Dorsolateral prefrontal cortex (tissue), 120 donors: ENCODE measurements at regions of chr18 and their contacts with region 1.

Region 1: DNA sequence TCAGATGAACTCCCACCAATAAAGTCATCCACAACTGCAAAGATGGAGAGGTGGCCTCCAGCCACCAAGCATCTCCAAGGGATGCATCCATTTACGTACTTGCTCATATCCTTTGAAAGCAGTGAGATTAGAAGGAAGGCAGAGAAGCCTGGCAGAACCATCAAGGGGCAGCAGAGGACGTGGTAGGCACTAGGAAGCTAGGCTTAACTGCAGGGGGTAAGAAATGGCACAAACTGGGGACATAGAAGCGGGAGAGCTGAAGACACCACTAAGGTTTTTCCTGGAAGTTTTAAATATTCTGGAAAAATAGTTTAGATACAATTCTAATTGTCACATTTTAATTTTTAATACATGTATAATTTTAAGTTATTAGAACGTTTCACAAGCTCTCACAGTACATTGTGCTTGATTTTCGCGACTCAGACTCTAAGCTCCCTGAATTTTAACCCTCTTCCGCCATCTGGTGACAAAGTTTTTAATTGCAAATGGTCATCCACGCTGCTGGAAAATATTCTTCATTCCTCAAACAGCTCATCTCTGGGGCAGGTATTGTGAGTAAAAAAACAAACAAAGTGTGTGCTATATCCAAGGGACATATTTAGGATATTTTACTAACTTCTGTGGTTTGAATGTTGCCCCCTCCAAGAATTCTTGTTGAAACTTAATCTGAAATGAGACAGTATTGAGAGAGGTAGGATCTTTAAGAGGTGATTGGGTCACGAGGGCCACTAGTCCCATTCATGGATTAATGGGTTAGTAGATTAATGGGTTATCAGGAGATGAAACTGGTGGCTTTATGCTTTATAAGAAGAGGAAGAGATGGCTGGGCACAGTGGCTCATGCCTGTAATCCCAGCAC is 1.6 kb upstream of the PSTPIP2 start:
- DNase-seq: peak in 3 of 10 donors; percentile 11 to 34 (median 31)
- H3K4me3 ChIP-seq: peak overlapping the region in 1 of 59 donors; percentile 17
- H3K27ac ChIP-seq: no peak overlapping the region
- H3K27me3 ChIP-seq: peaks cover 0 to 15% (median 0%) of the 10 kb centered on the region in 45 donors
- CTCF ChIP-seq: peak; percentile 56 to 87 (median 73)

Region 2: GRCh38 chr18:45526114-45526841 is 547.4 kb before region 1 on chr18:
- intact Hi-C with region 1: no loop called
- DNase-seq: no peak
- H3K4me3 ChIP-seq: no peak overlapping the region
- H3K27ac ChIP-seq: no peak overlapping the region
- H3K27me3 ChIP-seq: no peaks in the 10 kb centered on the region
- CTCF ChIP-seq: peak in 16 of 56 donors; percentile 12 to 45 (median 20)

Region 3: GRCh38 chr18:45664824-45665763 is 408.6 kb before region 1 on chr18:
- intact Hi-C with region 1: loop called (anchors 5 to 10 kb)
- DNase-seq: peak in 8 of 10 donors; percentile 38 to 79 (median 62)
- H3K4me3 ChIP-seq: no peak overlapping the region
- H3K27ac ChIP-seq: no peak overlapping the region
- H3K27me3 ChIP-seq: no peaks in the 10 kb centered on the region
- CTCF ChIP-seq: peak; percentile 51 to 93 (median 88)

Region 4: GRCh38 chr18:45900623-45901022 is 173.1 kb before region 1 on chr18:
- intact Hi-C with region 1: loop called in 1 of 2 experiments (anchors 10 kb)
- DNase-seq: no peak
- H3K4me3 ChIP-seq: no peak overlapping the region
- H3K27ac ChIP-seq: no peak overlapping the region
- H3K27me3 ChIP-seq: no peaks in the 10 kb centered on the region
- CTCF ChIP-seq: no peak

Region 5: DNA sequence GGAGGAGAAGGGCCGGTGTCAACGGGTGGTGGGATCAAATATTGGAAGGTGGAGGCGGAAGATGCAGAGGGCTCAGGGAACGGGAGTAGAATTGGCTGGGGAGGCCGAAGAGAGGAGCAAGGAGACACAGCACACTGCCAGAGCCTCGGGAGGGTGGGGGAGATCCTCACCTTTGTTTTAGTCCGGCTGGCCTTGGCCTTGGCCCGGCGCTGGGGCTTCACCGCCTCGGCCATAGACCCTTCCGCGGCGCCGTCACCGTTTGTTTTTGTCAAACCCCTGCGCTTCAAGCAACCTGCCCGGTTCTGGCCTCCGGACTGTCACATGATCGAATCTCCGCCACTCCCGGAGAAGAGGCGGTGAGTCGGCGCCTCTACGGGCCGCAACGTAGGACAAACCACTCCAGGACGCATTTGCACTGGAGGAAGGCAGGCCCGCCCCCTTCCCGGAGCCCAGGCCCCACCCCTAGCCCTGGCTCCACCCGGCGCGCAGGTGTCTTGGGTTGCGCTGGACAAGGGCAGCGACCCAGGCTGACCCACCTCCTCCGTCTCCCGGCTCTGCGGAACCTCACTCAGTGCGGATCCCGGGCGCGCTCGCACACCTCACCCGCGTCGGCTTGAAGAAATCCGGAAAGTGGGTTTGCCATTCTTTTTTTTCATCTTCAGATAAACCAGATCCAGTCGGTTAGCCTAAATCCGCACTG is 106.5 kb before region 1 on chr18 and contains the start of gene EPG5:
- intact Hi-C with region 1: loop called in 1 of 2 experiments (anchors 10 kb)
- DNase-seq: peak; percentile 85 to 97 (median 95)
- H3K4me3 ChIP-seq: peak within 1 kb of the TSS; percentile 69 to 99 (median 90)
- H3K27ac ChIP-seq: peak within 1 kb of the TSS in 47 of 59 donors; percentile 8 to 87 (median 65)
- H3K27me3 ChIP-seq: no peaks in the 10 kb centered on the region
- CTCF ChIP-seq: peak in 31 of 56 donors; percentile 3 to 53 (median 29)
- total RNA-seq, gene EPG5: 33.0 to 67.5 (median 49.2) TPM

Region 6: GRCh38 chr18:46034230-46034629 is 39.5 kb before region 1 on chr18:
- intact Hi-C with region 1: loop called in 1 of 2 experiments (anchors 5 kb)
- DNase-seq: no peak
- H3K4me3 ChIP-seq: no peak overlapping the region
- H3K27ac ChIP-seq: no peak overlapping the region
- H3K27me3 ChIP-seq: no peaks in the 10 kb centered on the region
- CTCF ChIP-seq: no peak